PC-9 (cell line): ENCODE measurements at regions of chr11 and their contacts with region 1.

Region 1: GRCh38 chr11:111982019-111982464 is 43.2 kb upstream of the DLAT start:
- DNase-seq: peak; percentile 53 to 58
- H3K4me3 ChIP-seq: no peak overlapping the region
- H3K27ac ChIP-seq: no peak overlapping the region
- H3K4me1 ChIP-seq: 0 out of 2 replicates have a peak, but pooled peaks cover 4% of the 10 kb centered on the region
- H3K27me3 ChIP-seq: 0 out of 2 replicates have a peak, but pooled peaks cover 12% of the 10 kb centered on the region
- CTCF ChIP-seq: peak; percentile 86

Region 2: GRCh38 chr11:111935317-111936039 is 46.6 kb before region 1 on chr11:
- CTCF ChIA-PET with region 1: interaction called, 14 read pairs
- POLR2A ChIA-PET with region 1: interaction called, 3 read pairs
- intact Hi-C with region 1: no loop called
- DNase-seq: no peak
- H3K4me3 ChIP-seq: no peak overlapping the region
- H3K27ac ChIP-seq: no peak overlapping the region
- H3K4me1 ChIP-seq: 0 out of 2 replicates have a peak, but pooled peaks cover 8% of the 10 kb centered on the region
- H3K27me3 ChIP-seq: 0 out of 2 replicates have a peak, but pooled peaks cover 3% of the 10 kb centered on the region
- CTCF ChIP-seq: no peak